Caco-2 (cell line): ENCODE measurements at regions of chr13 and their contacts with region 1.

Region 1: GRCh38 chr13:98927951-98928927 is 49.6 kb downstream of the DOCK9 start:
- DNase-seq: peak; percentile 89 to 91
- H3K4me3 ChIP-seq: no peak overlapping the region
- H3K4me3 Mint-ChIP-seq: peak overlapping the region; percentile 48
- H3K27ac Mint-ChIP-seq: peak overlapping the region; percentile 66
- H3K4me1 ChIP-seq: peaks cover 60% of the 10 kb centered on the region
- H3K4me1 Mint-ChIP-seq: peaks cover 39% of the 10 kb centered on the region
- H3K27me3 ChIP-seq: no peaks in the 10 kb centered on the region
- H3K27me3 Mint-ChIP-seq: no peaks in the 10 kb centered on the region
- CTCF ChIP-seq: no peak

Region 2: GRCh38 chr13:98896634-98897155 is 31.5 kb before region 1 on chr13:
- CTCF ChIA-PET with region 1: interaction called, 3 read pairs
- POLR2A ChIA-PET with region 1: interaction called, 6 read pairs
- intact Hi-C with region 1: loop called (anchors 1 kb)
- DNase-seq: peak; percentile 47 to 57
- H3K4me3 ChIP-seq: no peak overlapping the region
- H3K4me3 Mint-ChIP-seq: peak overlapping the region; percentile 8
- H3K27ac Mint-ChIP-seq: peak overlapping the region; percentile 63
- H3K4me1 ChIP-seq: peaks cover 37% of the 10 kb centered on the region
- H3K4me1 Mint-ChIP-seq: peaks cover 28% of the 10 kb centered on the region
- H3K27me3 ChIP-seq: no peaks in the 10 kb centered on the region
- H3K27me3 Mint-ChIP-seq: no peaks in the 10 kb centered on the region
- CTCF ChIP-seq: no peak

Region 3: GRCh38 chr13:98910501-98910951 is 17.7 kb before region 1 on chr13:
- CTCF ChIA-PET with region 1: no interaction called
- POLR2A ChIA-PET with region 1: no interaction called
- intact Hi-C with region 1: no loop called
- DNase-seq: no peak
- H3K4me3 ChIP-seq: no peak overlapping the region
- H3K4me3 Mint-ChIP-seq: no peak overlapping the region
- H3K27ac Mint-ChIP-seq: peak overlapping the region; percentile 48
- H3K4me1 ChIP-seq: 0 out of 2 replicates have a peak, but pooled peaks cover 5% of the 10 kb centered on the region
- H3K4me1 Mint-ChIP-seq: peaks cover 8% of the 10 kb centered on the region
- H3K27me3 ChIP-seq: no peaks in the 10 kb centered on the region
- H3K27me3 Mint-ChIP-seq: no peaks in the 10 kb centered on the region
- CTCF ChIP-seq: no peak

Region 4: DNA sequence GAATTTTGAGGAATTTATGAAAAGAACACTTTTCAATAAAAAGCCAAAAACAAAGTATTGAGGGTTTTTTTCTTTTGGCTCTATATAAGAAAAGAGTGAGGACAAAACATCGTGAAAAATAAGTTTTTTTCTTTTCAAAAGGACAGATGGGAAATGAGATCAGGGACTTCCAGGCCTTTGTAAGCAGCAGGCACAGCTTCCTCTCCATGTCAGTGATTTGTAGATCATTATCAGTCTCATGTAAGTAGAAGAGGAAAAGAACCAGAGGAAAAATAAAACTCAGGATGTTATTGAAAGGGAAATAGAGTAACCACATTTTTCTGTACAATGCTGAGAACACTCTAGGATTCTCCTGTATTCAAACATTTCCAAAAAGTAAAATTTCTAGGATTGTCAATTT is 19.7 kb after region 1 on chr13:
- CTCF ChIA-PET with region 1: no interaction called
- POLR2A ChIA-PET with region 1: interaction called, 4 read pairs
- intact Hi-C with region 1: loop called (anchors 1 kb)
- DNase-seq: no peak
- H3K4me3 ChIP-seq: no peak overlapping the region
- H3K4me3 Mint-ChIP-seq: no peak overlapping the region
- H3K27ac Mint-ChIP-seq: no peak overlapping the region
- H3K4me1 ChIP-seq: peaks cover 35% of the 10 kb centered on the region
- H3K4me1 Mint-ChIP-seq: peaks cover 41% of the 10 kb centered on the region
- H3K27me3 ChIP-seq: no peaks in the 10 kb centered on the region
- H3K27me3 Mint-ChIP-seq: no peaks in the 10 kb centered on the region
- CTCF ChIP-seq: no peak

Region 5: GRCh38 chr13:98972627-98973026 is 44.4 kb after region 1 on chr13:
- CTCF ChIA-PET with region 1: no interaction called
- POLR2A ChIA-PET with region 1: interaction called, 4 read pairs
- intact Hi-C with region 1: loop called (anchors 1 kb)
- DNase-seq: peak; percentile 75 to 82
- H3K4me3 ChIP-seq: no peak overlapping the region
- H3K4me3 Mint-ChIP-seq: peak overlapping the region; percentile 64
- H3K27ac Mint-ChIP-seq: peak overlapping the region; percentile 90
- H3K4me1 ChIP-seq: peaks cover 65% of the 10 kb centered on the region
- H3K4me1 Mint-ChIP-seq: peaks cover 54% of the 10 kb centered on the region
- H3K27me3 ChIP-seq: no peaks in the 10 kb centered on the region
- H3K27me3 Mint-ChIP-seq: no peaks in the 10 kb centered on the region
- CTCF ChIP-seq: no peak

Region 6: GRCh38 chr13:98977568-98978265 is 49.5 kb after region 1 on chr13 and contains the start of gene DOCK9:
- CTCF ChIA-PET with region 1: no interaction called
- POLR2A ChIA-PET with region 1: interaction called, 4 read pairs
- intact Hi-C with region 1: loop called (anchors 1 kb)
- DNase-seq: peak; percentile 63 to 68
- H3K4me3 ChIP-seq: peak within 1 kb of the TSS; percentile 11
- H3K4me3 Mint-ChIP-seq: peak within 1 kb of the TSS; percentile 77
- H3K27ac Mint-ChIP-seq: peak within 1 kb of the TSS; percentile 88
- H3K4me1 ChIP-seq: peaks cover 50% of the 10 kb centered on the region
- H3K4me1 Mint-ChIP-seq: peaks cover 49% of the 10 kb centered on the region
- H3K27me3 ChIP-seq: no peaks in the 10 kb centered on the region
- H3K27me3 Mint-ChIP-seq: no peaks in the 10 kb centered on the region
- CTCF ChIP-seq: no peak
- total RNA-seq, gene DOCK9: 219 and 260 TPM in 2 replicates